Breast epithelium (tissue), 4 donors: ENCODE measurements at regions of chr10 and their contacts with region 1.

Region 1: GRCh38 chr10:114634607-114634974 is 23.5 kb downstream of the ABLIM1 start:
- DNase-seq: peak in 1 of 2 donors; percentile 73
- H3K4me3 ChIP-seq: no peak overlapping the region
- H3K27ac ChIP-seq: peak overlapping the region; percentile 72 to 73
- H3K4me1 ChIP-seq: peaks cover 0 to 13% of the 10 kb centered on the region in 2 donors
- H3K27me3 ChIP-seq: no peaks in the 10 kb centered on the region
- CTCF ChIP-seq: no peak
- POLR2A ChIP-seq: no peak

Region 2: GRCh38 chr10:114623661-114624294 is 10.8 kb before region 1 on chr10:
- intact Hi-C with region 1: loop called (anchors 2 kb)
- DNase-seq: peak in 1 of 2 donors; percentile 24
- H3K4me3 ChIP-seq: no peak overlapping the region
- H3K27ac ChIP-seq: peak overlapping the region; percentile 68 to 70
- H3K4me1 ChIP-seq: no peaks in the 10 kb centered on the region
- H3K27me3 ChIP-seq: no peaks in the 10 kb centered on the region
- CTCF ChIP-seq: no peak
- POLR2A ChIP-seq: no peak